ENCODE measurements at regions of chr17 and their contacts with region 1.

Region 1: DNA sequence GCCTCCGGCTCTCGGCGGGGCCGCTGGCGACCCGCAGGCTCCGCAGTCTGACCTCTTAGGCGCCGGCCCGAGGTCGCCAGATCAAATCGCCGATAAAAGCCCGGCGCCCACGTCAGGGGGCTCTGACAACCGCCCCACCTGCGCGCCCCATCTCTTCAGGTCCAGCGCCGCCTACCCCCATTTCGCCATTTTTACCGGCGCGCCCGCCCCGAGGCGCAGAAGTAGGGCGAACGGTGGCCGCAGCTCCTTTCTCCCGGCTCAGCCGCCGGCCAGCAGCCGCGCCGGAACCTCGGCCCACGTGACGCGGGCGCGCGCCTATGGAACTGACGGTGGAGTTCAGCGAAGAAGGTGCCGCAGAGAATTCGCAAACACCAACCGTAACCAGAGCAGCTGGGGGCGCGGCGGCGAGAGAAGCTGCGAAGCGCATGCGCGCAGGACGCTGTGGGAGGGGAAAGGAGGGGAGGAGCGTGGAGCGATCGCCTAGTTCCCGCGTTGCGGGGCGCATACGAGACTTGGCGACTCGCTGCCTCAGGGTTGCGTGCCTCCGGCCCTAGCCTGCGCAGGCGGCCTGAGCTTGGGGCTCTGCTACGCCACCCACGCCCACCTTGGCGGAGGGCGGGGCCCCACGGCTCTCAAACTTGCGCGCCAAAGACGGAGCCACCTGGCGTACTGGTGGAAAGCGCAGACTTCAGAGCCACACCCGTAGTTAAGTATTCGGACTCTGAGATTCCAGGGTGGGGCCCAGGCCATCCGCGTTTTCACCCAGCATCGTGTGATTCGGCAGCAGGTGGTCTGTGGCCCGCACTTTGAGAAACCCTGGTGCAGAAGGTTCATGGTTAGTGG is at the start of gene TRIM37:
- DNase-seq: peak; percentile 93 to 98
- H3K4me3 ChIP-seq: peak within 1 kb of the TSS; percentile 74 to 90
- H3K27ac ChIP-seq: peak within 1 kb of the TSS; percentile 93 to 94
- H3K4me1 ChIP-seq: peaks cover 0 to 38% (median 22%) of the 10 kb centered on the region in 4 donors
- H3K27me3 ChIP-seq: no peaks in the 10 kb centered on the region
- CTCF ChIP-seq: peak in 1 of 2 experiments; percentile 9

Region 2: DNA sequence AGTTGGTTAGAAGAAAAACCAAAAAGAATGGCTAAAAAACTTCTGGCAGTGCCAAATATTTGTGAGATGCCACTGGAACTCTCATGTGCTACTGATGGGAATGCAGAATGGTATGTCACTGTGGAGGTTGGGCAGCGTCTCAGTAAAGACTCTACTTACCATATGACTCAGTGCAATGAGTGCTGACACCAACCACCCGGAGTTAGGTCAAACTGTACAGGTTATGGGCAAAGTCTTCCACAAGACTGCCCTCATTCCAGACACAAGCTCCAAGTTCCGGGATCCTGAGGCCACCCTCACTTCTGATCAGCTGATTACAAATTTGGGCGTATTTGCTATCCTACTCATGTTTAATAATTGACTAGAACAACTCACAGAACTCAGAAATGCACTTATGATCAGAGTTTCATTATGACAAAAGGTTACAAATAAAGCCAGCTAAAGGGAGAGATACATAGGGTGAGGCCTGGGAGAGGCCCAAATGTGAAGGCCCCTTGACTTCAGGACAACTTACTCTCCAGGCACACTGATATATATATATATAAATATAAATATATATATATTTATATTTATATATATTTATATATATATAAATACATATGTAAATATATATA is 114.9 kb before region 1 on chr17:
- intact Hi-C with region 1: no loop called
- DNase-seq: no peak
- H3K4me3 ChIP-seq: no peak overlapping the region
- H3K27ac ChIP-seq: no peak overlapping the region
- H3K4me1 ChIP-seq: peaks cover 0 to 23% (median 9%) of the 10 kb centered on the region in 4 donors
- H3K27me3 ChIP-seq: no peaks in the 10 kb centered on the region
- CTCF ChIP-seq: no peak

Region 3: DNA sequence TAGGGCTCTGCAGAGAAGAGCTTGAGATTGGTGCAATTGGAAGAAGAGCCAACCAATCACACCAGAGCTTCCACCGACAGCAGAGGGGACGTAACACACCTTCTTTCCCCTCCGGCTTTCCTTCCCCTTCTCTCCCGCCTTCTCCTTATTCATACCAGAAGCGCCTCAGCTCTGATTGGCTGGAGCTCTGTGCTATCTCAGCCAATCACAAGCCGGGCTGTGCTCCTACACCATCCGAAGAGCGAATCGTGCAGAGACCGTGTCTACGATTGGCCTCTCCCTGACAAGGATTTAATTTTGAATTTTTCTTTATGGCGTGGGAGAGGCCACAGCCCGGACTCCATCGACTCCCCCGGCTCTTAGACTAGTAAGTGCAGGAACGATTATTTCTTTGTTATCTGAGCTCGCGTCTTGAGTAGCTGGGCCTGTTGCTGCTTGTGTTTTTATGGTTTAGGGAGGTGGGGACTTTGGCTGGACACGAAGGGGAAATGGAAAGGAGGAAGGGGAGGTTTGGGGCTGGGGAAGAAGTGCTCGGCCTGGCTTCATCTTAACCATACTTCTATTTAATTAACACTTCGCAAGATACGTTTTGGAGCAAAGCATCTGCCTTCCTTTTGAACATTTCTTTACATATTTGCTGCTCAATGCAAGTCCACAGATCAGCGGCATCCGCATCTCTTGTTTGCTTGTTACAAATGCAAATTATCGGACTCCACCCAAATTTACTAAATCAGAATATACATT is 48.9 kb after region 1 on chr17 and contains the start of gene PRR11:
- intact Hi-C with region 1: loop called (anchors 2 kb)
- DNase-seq: peak; percentile 98 to 99
- H3K4me3 ChIP-seq: peak within 1 kb of the TSS; percentile 75 to 76
- H3K27ac ChIP-seq: peak within 1 kb of the TSS; percentile 63 to 82
- H3K4me1 ChIP-seq: peaks cover 0 to 22% (median 6%) of the 10 kb centered on the region in 4 donors
- H3K27me3 ChIP-seq: no peaks in the 10 kb centered on the region
- CTCF ChIP-seq: no peak

Measured in tibial artery (tissue), 4 donors.